ENCODE measurements at regions of chr10 and their contacts with region 1.

Region 1: DNA sequence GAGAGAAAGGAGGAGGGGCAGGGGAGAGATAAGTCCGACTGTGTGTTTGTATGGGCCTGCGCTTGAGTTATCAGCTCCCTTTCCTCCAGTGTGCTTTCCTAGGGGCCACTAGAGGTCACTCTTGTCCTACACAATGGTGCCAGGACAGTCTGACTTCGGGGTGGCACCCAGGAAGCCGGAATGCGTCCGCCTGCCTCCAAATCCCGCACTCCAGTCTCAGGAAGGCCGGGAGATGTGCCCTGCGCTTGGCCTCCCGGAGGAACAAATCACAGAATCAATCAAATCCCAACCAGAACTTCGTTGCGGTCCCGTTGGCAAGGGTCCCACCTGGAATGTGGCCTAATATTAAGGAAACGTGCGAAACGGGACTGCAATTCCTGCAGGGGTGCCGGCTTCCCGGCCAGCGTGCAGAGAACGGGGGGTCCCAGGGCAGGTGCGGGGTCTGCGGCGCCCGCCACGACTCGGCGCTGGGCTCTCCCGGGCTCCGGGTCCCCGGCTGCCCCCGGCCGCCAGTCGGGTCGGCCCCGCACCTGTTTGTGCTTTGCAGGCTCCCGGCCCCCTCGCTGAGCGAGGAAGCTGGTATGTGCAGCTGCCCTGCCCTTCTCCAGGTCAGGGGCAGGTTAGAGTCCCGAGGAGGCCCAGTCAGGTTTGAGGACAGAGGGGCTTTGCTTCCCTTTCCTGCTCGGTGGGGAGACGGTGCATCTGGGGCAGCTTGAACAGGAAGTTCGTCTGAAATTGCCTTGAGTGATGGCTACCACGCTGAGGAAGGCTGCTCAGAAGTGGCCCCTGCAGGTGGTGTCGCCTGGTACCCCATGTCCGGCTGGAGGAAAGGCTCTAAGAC is 21.0 kb upstream of the HPS1 start:
- DNase-seq: peak; percentile 77
- ATAC-seq: peak; percentile 97
- H3K4me3 Mint-ChIP-seq: peak overlapping the region; percentile 84
- H3K27ac Mint-ChIP-seq: peak overlapping the region; percentile 83
- H3K4me1 Mint-ChIP-seq: peaks cover 9% of the 10 kb centered on the region
- H3K27me3 Mint-ChIP-seq: peaks cover 14% of the 10 kb centered on the region

Region 2: GRCh38 chr10:98481404-98481945 is 13.7 kb after region 1 on chr10:
- CTCF ChIA-PET with region 1: interaction called, 17 read pairs
- POLR2A ChIA-PET with region 1: interaction called, 4 read pairs
- DNase-seq: no peak
- ATAC-seq: no peak
- H3K4me3 Mint-ChIP-seq: no peak overlapping the region
- H3K27ac Mint-ChIP-seq: no peak overlapping the region
- H3K4me1 Mint-ChIP-seq: peaks cover 19% of the 10 kb centered on the region
- H3K27me3 Mint-ChIP-seq: peaks cover 9% of the 10 kb centered on the region

Region 3: DNA sequence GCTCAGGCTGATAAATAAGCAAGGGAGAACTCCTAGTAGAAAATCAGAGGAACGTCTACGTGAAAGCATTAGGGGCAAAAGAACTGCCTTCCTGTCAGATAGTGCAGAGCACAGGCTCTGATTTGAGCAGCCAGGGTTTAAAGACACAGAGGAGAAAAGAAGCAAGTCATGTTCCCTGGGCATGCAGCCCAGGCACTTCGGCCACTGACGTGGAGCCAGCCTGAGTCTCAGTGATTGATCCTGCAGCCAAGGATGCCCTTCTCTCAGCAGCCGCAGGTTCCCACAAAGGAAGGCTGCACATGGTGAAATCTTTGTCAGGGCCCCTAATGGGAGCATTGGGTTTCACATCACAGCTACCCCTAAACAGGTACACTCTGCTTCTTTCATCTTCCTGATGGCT is 140.7 kb after region 1 on chr10:
- CTCF ChIA-PET with region 1: no interaction called
- POLR2A ChIA-PET with region 1: no interaction called
- DNase-seq: no peak
- ATAC-seq: no peak
- H3K4me3 Mint-ChIP-seq: no peak overlapping the region
- H3K27ac Mint-ChIP-seq: no peak overlapping the region
- H3K4me1 Mint-ChIP-seq: no peaks in the 10 kb centered on the region
- H3K27me3 Mint-ChIP-seq: peaks cover 12% of the 10 kb centered on the region

Region 4: DNA sequence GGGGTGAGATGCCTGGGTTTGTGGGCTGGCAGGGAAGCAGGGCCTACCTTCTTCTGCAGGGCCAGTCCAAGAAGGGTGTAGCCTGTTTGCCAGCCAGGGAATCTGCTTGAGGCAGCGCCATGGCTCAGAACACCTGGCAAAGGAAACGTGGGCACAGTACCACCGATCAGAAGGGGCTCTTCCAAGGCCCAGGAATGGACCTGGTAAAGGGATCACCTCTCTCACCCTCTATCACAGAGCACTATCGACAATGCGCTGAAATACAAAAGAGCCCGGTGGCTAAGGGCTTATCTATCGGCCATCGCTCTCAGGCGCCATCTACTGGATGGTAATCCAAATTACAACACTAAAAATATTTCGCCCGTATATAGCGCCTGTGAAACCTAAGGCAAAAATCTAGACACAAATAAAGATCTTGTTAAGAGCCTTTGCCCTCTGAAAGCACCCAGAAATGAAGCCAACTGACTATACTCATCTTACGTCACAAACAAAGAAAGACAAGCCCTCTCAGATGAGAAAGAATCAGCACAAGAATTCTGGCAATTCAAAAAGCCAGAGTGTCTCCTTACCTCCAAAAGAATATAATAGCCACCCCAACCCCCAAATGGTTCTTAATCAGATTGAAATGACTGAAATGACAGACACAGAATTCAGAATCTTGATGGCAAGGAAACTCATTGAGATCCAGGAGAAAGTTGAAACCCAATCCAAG is 196.8 kb after region 1 on chr10:
- CTCF ChIA-PET with region 1: interaction called, 15 read pairs
- POLR2A ChIA-PET with region 1: no interaction called
- DNase-seq: peak; percentile 57
- ATAC-seq: peak; percentile 64
- H3K4me3 Mint-ChIP-seq: no peak overlapping the region
- H3K27ac Mint-ChIP-seq: no peak overlapping the region
- H3K4me1 Mint-ChIP-seq: no peaks in the 10 kb centered on the region
- H3K27me3 Mint-ChIP-seq: peaks cover 22% of the 10 kb centered on the region

Region 5: GRCh38 chr10:99248824-99249223 is 781.1 kb after region 1 on chr10:
- CTCF ChIA-PET with region 1: interaction called, 24 read pairs
- POLR2A ChIA-PET with region 1: no interaction called
- DNase-seq: no peak
- ATAC-seq: no peak
- H3K4me3 Mint-ChIP-seq: no peak overlapping the region
- H3K27ac Mint-ChIP-seq: no peak overlapping the region
- H3K4me1 Mint-ChIP-seq: no peaks in the 10 kb centered on the region
- H3K27me3 Mint-ChIP-seq: no peaks in the 10 kb centered on the region